ENCODE measurements at regions of chr17 and their contacts with region 1.

Region 1: GRCh38 chr17:74736513-74737298 is at the start of gene RAB37:
- DNase-seq: peak in 8 of 14 experiments; percentile 34 to 81 (median 52)
- ATAC-seq: peak; percentile 27
- H3K4me3 ChIP-seq: peak within 1 kb of the TSS; percentile 93
- H3K4me3 Mint-ChIP-seq: peak within 1 kb of the TSS; percentile 95
- H3K27ac ChIP-seq: peak within 1 kb of the TSS; percentile 60 to 70
- H3K27ac Mint-ChIP-seq: peak within 1 kb of the TSS; percentile 91
- H3K4me1 ChIP-seq: peaks cover 77% of the 10 kb centered on the region
- H3K4me1 Mint-ChIP-seq: peaks cover 47% of the 10 kb centered on the region
- H3K27me3 ChIP-seq: no peaks in the 10 kb centered on the region
- H3K27me3 Mint-ChIP-seq: no peaks in the 10 kb centered on the region
- CTCF ChIP-seq: peak; percentile 66
- total RNA-seq, gene RAB37: 19.0 to 21.1 TPM

Region 2: GRCh38 chr17:74659898-74660297 is 76.8 kb before region 1 on chr17:
- CTCF ChIA-PET with region 1: interaction called, 101 read pairs
- POLR2A ChIA-PET with region 1: interaction called, 54 read pairs
- intact Hi-C with region 1: loop called (anchors 1 kb)
- DNase-seq: no peak
- ATAC-seq: no peak
- H3K4me3 ChIP-seq: no peak overlapping the region
- H3K4me3 Mint-ChIP-seq: no peak overlapping the region
- H3K27ac ChIP-seq: no peak overlapping the region
- H3K27ac Mint-ChIP-seq: no peak overlapping the region
- H3K4me1 ChIP-seq: peaks cover 6% of the 10 kb centered on the region
- H3K4me1 Mint-ChIP-seq: peaks cover 5% of the 10 kb centered on the region
- H3K27me3 ChIP-seq: peaks cover 5 to 12% of the 10 kb centered on the region in 2 experiments
- H3K27me3 Mint-ChIP-seq: peaks cover 52% of the 10 kb centered on the region
- CTCF ChIP-seq: no peak

Region 3: DNA sequence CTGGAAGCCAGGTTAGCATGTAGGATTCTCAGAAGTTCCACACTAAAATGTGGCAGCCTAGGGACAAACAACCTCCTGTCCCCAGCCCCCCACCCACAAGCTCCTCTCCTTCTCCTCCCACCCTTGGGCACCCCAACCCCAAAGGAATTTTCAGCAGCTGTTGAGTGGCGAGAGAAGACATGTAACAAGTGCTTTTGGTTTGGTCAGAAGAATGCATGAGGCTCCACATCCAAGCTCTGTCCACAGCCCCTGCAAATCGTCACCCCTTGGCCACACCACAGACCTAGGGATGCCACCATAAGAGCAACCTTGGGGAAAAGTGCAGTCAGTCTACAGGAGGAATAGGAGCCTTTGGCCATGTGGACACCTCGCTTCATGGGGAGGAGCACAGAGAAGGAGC is 11.6 kb before region 1 on chr17:
- CTCF ChIA-PET with region 1: interaction called, 10 read pairs
- POLR2A ChIA-PET with region 1: interaction called, 3 read pairs
- intact Hi-C with region 1: no loop called
- DNase-seq: no peak
- ATAC-seq: no peak
- H3K4me3 ChIP-seq: no peak overlapping the region
- H3K4me3 Mint-ChIP-seq: no peak overlapping the region
- H3K27ac ChIP-seq: no peak overlapping the region
- H3K27ac Mint-ChIP-seq: no peak overlapping the region
- H3K4me1 ChIP-seq: peaks cover 12% of the 10 kb centered on the region
- H3K4me1 Mint-ChIP-seq: no peaks in the 10 kb centered on the region
- H3K27me3 ChIP-seq: no peaks in the 10 kb centered on the region
- H3K27me3 Mint-ChIP-seq: no peaks in the 10 kb centered on the region
- CTCF ChIP-seq: no peak

Region 4: DNA sequence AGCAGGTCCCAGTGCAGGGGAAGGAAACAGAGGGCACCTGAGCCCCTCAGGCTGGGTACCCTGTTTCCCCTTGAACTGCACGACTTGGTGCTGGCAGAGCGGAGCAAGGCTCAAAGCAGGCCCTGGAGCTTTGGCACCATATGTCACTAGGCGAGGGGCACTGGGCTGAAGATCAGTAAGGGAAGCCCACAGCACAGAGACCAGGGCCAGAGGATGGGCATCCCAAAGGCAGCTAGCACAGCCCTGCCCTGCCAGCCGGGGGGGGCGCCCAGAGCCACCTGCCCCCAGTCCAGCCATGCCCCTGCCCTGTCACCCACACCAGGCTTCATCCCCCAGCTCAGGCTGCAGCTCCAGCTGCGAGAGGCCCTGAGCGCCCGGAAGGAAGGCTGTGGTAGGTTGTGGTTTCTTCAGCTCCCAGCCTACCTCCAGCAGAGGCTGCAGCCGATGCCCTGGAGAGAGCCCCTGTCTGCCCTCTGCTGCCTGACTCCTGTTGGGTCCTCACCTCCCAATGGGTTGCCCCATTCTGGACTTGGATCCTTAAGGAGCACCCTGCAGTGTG is 22.6 kb after region 1 on chr17:
- CTCF ChIA-PET with region 1: interaction called, 18 read pairs
- POLR2A ChIA-PET with region 1: interaction called, 33 read pairs
- intact Hi-C with region 1: no loop called
- DNase-seq: peak; percentile 37 to 83 (median 52)
- ATAC-seq: peak; percentile 82
- H3K4me3 ChIP-seq: peak overlapping the region; percentile 35
- H3K4me3 Mint-ChIP-seq: peak overlapping the region; percentile 88
- H3K27ac ChIP-seq: peak overlapping the region; percentile 61 to 63
- H3K27ac Mint-ChIP-seq: peak overlapping the region; percentile 91
- H3K4me1 ChIP-seq: peaks cover 100% of the 10 kb centered on the region
- H3K4me1 Mint-ChIP-seq: peaks cover 70% of the 10 kb centered on the region
- H3K27me3 ChIP-seq: no peaks in the 10 kb centered on the region
- H3K27me3 Mint-ChIP-seq: no peaks in the 10 kb centered on the region
- CTCF ChIP-seq: peak; percentile 38

Region 5: DNA sequence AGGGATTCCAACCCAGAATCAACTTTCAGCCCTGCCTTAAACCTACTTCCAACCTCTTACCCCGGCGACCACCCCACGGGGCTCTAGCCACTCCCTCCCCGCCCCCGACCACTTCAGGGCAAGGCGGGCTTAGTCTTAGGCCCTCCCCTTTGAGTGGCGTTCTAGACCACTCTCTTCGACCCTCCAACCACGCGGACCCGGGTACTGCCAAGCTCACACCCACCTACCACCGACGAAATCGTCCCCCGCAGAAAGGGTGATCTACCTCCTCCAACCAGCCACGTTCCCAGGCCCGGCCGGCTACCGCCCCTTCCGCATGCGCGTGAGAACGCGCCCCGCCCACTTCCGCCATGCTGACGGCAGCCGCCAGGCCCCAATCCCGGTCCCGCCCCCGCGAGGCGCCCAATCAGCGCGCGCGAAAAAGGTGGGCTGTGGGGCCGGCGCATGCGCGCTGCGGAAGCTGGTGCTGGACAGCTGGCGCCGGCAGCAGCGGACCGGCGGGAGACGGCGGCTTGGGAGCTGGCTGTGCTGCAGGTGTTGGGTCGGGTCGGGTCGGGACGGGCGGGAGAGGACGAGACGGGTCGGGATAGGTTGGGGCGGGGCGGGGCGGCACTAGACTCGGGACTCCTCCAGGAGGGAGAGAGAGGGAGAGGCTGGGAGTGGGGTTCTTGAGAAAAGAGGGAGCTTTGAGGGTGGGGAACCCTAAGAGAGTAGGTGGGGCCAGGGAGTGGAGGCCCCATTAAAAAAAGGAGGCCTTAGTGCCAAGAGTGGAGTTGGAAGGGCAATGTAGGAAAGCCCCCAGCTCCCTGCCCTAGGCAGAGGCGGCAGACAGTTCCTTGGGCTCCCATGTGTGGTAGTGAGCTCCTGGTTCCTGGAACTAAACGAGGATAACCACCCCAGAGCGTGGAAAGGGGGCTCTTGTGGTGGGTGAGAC is 39.6 kb after region 1 on chr17 and contains the start of gene NAT9:
- CTCF ChIA-PET with region 1: interaction called, 24 read pairs
- POLR2A ChIA-PET with region 1: interaction called, 28 read pairs
- intact Hi-C with region 1: no loop called
- DNase-seq: peak; percentile 96 to 100 (median 99)
- ATAC-seq: peak; percentile 72
- H3K4me3 ChIP-seq: peak within 1 kb of the TSS; percentile 79
- H3K4me3 Mint-ChIP-seq: peak within 1 kb of the TSS; percentile 99
- H3K27ac ChIP-seq: peak within 1 kb of the TSS; percentile 48 to 51
- H3K27ac Mint-ChIP-seq: peak within 1 kb of the TSS; percentile 86
- H3K4me1 ChIP-seq: peaks cover 77% of the 10 kb centered on the region
- H3K4me1 Mint-ChIP-seq: peaks cover 64% of the 10 kb centered on the region
- H3K27me3 ChIP-seq: no peaks in the 10 kb centered on the region
- H3K27me3 Mint-ChIP-seq: no peaks in the 10 kb centered on the region
- CTCF ChIP-seq: no peak
- total RNA-seq, gene NAT9: 34.6 to 38.2 TPM